Activated CD4-positive, alpha-beta T cell treated with anti-CD3 and anti-CD28 coated beads, Interleukin-2, amount 10 ng/mL, durations not matched to agents 24 days and 14 days (primary cell): ENCODE measurements at regions of chr3 and their contacts with region 1.

Region 1: DNA sequence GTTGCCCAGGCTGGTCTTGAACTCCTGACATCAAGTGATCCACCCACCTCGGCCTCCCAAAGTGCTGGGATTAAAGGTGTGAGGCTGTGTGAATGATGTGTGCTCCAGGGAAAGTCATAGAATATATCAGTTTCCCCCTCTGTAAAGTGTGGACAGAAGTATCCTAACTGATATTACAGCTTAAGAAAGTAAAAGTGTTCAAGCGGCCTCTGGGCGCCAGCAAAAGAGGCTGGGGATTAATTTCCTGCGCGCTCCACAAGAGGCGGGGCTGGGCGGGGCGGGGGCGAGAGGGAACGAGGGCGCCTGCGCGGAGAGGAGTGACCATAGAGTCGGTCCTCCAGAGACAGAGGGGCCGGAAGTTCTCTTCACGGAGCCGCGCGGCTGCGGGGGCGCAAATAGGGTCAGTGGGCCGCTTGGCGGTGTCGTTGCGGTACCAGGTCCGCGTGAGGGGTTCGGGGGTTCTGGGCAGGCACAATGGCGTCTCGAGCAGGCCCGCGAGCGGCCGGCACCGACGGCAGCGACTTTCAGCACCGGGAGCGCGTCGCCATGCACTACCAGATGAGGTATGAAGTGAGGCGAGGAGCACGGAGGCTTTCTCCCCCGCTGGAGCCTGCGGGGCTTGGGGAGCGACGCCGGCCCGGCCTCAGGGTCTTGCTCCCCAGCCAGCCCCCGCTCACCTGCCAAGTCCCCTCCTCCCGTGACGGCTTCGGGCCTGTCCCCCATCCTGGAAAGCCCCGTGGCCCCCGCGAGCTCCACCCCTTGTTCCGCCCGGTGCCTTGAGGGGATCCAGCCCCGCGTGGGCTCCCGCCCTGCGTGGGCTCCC is at the start of gene JAGN1:
- DNase-seq: peak; percentile 96
- H3K4me3 Mint-ChIP-seq: peak within 1 kb of the TSS; percentile 98
- H3K27ac Mint-ChIP-seq: peak within 1 kb of the TSS; percentile 99
- H3K4me1 Mint-ChIP-seq: peaks cover 33% of the 10 kb centered on the region
- H3K27me3 Mint-ChIP-seq: no peaks in the 10 kb centered on the region
- total RNA-seq, gene JAGN1: 39.5 and 41.0 TPM in 2 replicates

Region 2: GRCh38 chr3:9649791-9650521 is 240.5 kb before region 1 on chr3:
- intact Hi-C with region 1: loop called (anchors 1 kb)
- DNase-seq: peak; percentile 71
- H3K4me3 Mint-ChIP-seq: peak overlapping the region; percentile 99
- H3K27ac Mint-ChIP-seq: peak overlapping the region; percentile 92
- H3K4me1 Mint-ChIP-seq: peaks cover 17% of the 10 kb centered on the region
- H3K27me3 Mint-ChIP-seq: peaks cover 2% of the 10 kb centered on the region

Region 3: GRCh38 chr3:9669720-9670432 is 220.6 kb before region 1 on chr3:
- intact Hi-C with region 1: no loop called
- DNase-seq: no peak
- H3K4me3 Mint-ChIP-seq: no peak overlapping the region
- H3K27ac Mint-ChIP-seq: no peak overlapping the region
- H3K4me1 Mint-ChIP-seq: no peaks in the 10 kb centered on the region
- H3K27me3 Mint-ChIP-seq: no peaks in the 10 kb centered on the region

Region 4: GRCh38 chr3:9843715-9844438 is 46.6 kb before region 1 on chr3 and contains the start of gene RPUSD3:
- intact Hi-C with region 1: loop called (anchors 1 kb)
- DNase-seq: peak; percentile 99
- H3K4me3 Mint-ChIP-seq: peak within 1 kb of the TSS; percentile 99
- H3K27ac Mint-ChIP-seq: peak within 1 kb of the TSS; percentile 98
- H3K4me1 Mint-ChIP-seq: peaks cover 26% of the 10 kb centered on the region
- H3K27me3 Mint-ChIP-seq: no peaks in the 10 kb centered on the region
- total RNA-seq, gene RPUSD3: 84.3 and 85.7 TPM in 2 replicates

Region 5: GRCh38 chr3:9902372-9903237 is 12.1 kb after region 1 on chr3 and contains the start of gene IL17RE:
- intact Hi-C with region 1: loop called (anchors 1 kb)
- DNase-seq: no peak
- H3K4me3 Mint-ChIP-seq: peak within 1 kb of the TSS; percentile 71
- H3K27ac Mint-ChIP-seq: peak within 1 kb of the TSS; percentile 80
- H3K4me1 Mint-ChIP-seq: peaks cover 30% of the 10 kb centered on the region
- H3K27me3 Mint-ChIP-seq: no peaks in the 10 kb centered on the region
- total RNA-seq, gene IL17RE: 1.1 TPM in 2 replicates

Region 6: GRCh38 chr3:9915254-9916141 is 25.0 kb after region 1 on chr3:
- intact Hi-C with region 1: loop called (anchors 2 kb)
- DNase-seq: peak; percentile 80
- H3K4me3 Mint-ChIP-seq: peak overlapping the region; percentile 77
- H3K27ac Mint-ChIP-seq: peak overlapping the region; percentile 71
- H3K4me1 Mint-ChIP-seq: peaks cover 14% of the 10 kb centered on the region
- H3K27me3 Mint-ChIP-seq: peaks cover 2% of the 10 kb centered on the region

Region 7: DNA sequence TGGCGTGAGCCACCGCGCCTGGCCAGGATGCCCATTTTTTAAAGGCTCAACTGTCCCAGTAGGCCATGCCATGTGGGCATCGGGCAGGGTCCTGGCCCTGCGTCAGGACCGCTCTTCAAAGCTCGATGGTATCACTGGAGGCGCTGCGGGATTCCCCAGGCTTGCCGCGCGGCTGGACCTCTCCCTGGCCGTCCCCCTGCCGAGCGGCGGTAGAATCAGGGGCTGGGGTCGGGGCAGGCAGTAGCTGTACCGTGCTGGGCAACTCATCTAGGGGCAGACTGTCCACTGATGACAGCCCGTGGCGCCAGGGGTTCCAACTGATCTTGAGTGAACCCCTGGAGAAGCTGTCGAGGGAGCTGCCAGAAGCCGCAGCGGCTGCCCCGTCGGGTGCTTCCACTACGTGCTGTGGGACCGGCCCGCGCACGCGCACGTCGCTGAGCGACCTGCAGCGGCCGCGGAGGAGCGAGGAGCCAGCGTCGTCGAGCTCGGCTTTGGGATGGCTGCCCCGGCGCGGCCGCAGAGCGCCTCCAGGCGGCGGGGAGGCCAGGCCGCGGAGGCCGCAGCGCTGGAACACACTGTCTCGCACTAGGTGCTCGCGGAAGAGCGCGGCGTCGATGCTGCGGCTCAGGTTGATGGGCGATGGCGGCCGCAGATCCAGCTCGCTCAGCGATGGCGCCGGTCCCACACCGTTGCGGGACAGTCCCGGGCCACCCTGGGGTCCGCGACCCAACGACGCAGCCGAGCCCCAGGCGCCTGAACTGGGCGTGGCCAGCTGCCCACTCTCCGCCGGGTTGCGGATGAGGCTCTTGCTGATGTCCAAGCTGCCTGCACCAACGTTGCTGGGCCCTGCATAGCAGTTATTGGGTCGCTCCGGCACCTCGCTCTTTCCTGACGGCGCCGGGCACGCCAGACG is 55.9 kb after region 1 on chr3:
- intact Hi-C with region 1: loop called (anchors 5 kb)
- DNase-seq: peak; percentile 97
- H3K4me3 Mint-ChIP-seq: peak overlapping the region; percentile 91
- H3K27ac Mint-ChIP-seq: peak overlapping the region; percentile 87
- H3K4me1 Mint-ChIP-seq: peaks cover 13% of the 10 kb centered on the region
- H3K27me3 Mint-ChIP-seq: no peaks in the 10 kb centered on the region